GM12878 (cell line): ENCODE measurements at regions of chr1 and their contacts with region 1.

Region 1: DNA sequence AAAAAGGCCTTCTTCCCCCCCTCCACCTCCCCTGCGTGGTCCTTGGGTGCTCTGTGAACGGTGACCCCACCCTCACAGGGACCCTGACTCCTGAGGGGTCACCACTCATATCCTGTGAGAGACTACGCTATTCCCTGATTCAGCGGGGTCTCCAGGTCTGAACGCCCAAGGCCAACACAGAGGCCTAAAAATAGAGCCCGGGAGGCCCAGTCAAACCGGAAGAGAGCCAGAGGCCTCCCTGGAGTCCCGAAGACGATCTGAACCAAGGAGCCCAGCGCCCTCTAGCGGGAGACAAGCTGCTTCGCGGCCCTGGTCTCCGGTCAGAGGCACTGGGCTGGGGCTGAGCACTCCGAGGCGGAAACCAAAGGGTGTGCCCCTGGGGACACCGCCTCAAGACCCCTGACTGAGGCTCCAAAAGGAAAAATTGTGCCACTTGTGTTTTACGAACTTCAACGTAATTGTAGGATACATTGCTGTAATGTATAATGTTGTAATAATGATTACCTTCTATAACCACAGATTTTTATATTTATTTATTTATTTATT is 42.4 kb upstream of the PSEN2 start:
- DNase-seq: peak; percentile 62
- ATAC-seq: peak; percentile 95
- H3K4me3 ChIP-seq: no peak overlapping the region; the same call in 1 of the 2 replicates
- H3K27ac ChIP-seq: peak overlapping the region; percentile 85
- H3K4me1 ChIP-seq: peaks cover 31% of the 10 kb centered on the region
- H3K27me3 ChIP-seq: no peaks in the 10 kb centered on the region
- CTCF ChIP-seq: peak; percentile 93 to 98 (median 96)
- EP300 ChIP-seq: 0 out of 4 replicates have a peak, but pooled peaks of 1 of the 2 experiments have one; percentile 42
- POLR2A ChIP-seq: peak; percentile 27; the same call in 1 of the 2 replicates
- RAD21 ChIP-seq: peak; percentile 99

Region 2: DNA sequence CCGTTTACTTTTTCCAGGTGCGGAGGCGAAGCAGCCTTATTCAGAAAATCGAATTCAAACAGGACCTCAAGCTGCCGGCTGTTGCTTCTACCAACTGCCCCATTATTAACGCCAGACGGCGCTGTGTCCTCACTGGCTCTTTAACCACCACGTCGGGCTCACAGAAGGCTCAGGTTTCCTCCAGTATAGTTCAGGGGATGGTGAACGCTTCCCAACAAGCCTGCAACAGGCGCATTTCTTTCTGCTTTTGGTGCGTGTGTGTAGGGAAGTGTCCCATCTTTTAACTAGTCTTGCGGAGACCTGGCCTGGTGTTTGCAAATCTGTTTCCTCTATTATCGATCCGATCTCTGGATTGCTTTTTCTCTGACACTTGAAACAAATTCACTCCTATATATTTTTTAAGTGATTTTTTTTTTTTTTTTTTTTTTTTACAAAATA is 280.3 kb before region 1 on chr1:
- CTCF ChIA-PET with region 1: interaction called, 3 read pairs
- POLR2A ChIA-PET with region 1: no interaction called
- RAD21 ChIA-PET with region 1: interaction called, 4 read pairs
- SMC1A ChIA-PET with region 1: no interaction called
- in situ Hi-C with region 1: no loop called
- intact Hi-C with region 1: loop called (anchors 5 kb)
- DNase-seq: peak; percentile 17
- ATAC-seq: peak; percentile 92
- H3K4me3 ChIP-seq: no peak overlapping the region
- H3K27ac ChIP-seq: no peak overlapping the region
- H3K4me1 ChIP-seq: peaks cover 9% of the 10 kb centered on the region
- H3K27me3 ChIP-seq: peaks cover 10 to 11% of the 10 kb centered on the region in 2 experiments; a peak in 3 of 4 replicates
- CTCF ChIP-seq: peak; percentile 90 to 97 (median 93)
- EP300 ChIP-seq: no peak
- POLR2A ChIP-seq: no peak
- RAD21 ChIP-seq: peak; percentile 87

Region 3: GRCh38 chr1:226642876-226643576 is 185.0 kb before region 1 on chr1:
- CTCF ChIA-PET with region 1: interaction called, 8 read pairs
- POLR2A ChIA-PET with region 1: interaction called, 4 read pairs
- RAD21 ChIA-PET with region 1: interaction called, 22 read pairs
- SMC1A ChIA-PET with region 1: interaction called, 4 read pairs
- in situ Hi-C with region 1: no loop called
- intact Hi-C with region 1: no loop called
- DNase-seq: peak; percentile 33
- ATAC-seq: peak; percentile 79
- H3K4me3 ChIP-seq: no peak overlapping the region
- H3K27ac ChIP-seq: peak overlapping the region; percentile 64
- H3K4me1 ChIP-seq: peaks cover 27% of the 10 kb centered on the region
- H3K27me3 ChIP-seq: no peaks in the 10 kb centered on the region
- CTCF ChIP-seq: no peak
- EP300 ChIP-seq: no peak; a peak in 1 of 4 replicates
- POLR2A ChIP-seq: no peak
- RAD21 ChIP-seq: 0 out of 2 replicates have a peak, but pooled peaks have one; percentile 22

Region 4: GRCh38 chr1:226687426-226687825 is 140.6 kb before region 1 on chr1:
- CTCF ChIA-PET with region 1: interaction called, 12 read pairs
- POLR2A ChIA-PET with region 1: no interaction called
- RAD21 ChIA-PET with region 1: interaction called, 20 read pairs
- SMC1A ChIA-PET with region 1: interaction called, 10 read pairs
- in situ Hi-C with region 1: no loop called
- intact Hi-C with region 1: no loop called
- DNase-seq: no peak
- ATAC-seq: peak; percentile 63
- H3K4me3 ChIP-seq: no peak overlapping the region
- H3K27ac ChIP-seq: no peak overlapping the region
- H3K4me1 ChIP-seq: peaks cover 26% of the 10 kb centered on the region
- H3K27me3 ChIP-seq: no peaks in the 10 kb centered on the region
- CTCF ChIP-seq: peak; percentile 11 to 36 (median 35); a peak in 4 of 6 replicates
- EP300 ChIP-seq: no peak
- POLR2A ChIP-seq: no peak
- RAD21 ChIP-seq: peak; percentile 43

Region 5: DNA sequence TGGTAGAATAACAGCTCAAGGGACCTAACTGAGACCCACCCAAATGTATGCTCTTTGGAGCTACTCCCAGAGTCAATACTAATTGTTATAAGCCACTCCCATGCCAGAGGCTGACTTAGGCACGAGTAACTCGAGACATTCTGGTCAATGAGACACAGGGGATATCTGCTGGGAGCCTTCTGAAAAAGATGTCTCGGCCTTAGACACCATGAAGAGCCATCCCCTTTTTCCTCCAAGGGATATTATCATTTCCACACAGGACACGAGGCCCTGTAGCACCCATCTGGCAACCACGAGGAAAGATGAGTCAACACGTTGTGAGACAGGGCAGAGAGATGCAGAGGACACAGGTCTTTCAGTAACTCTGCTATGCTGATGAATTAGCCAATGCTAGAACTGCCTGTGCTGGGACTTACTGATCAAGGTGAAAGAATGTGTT is 119.7 kb before region 1 on chr1:
- CTCF ChIA-PET with region 1: interaction called, 20 read pairs
- POLR2A ChIA-PET with region 1: no interaction called
- RAD21 ChIA-PET with region 1: interaction called, 20 read pairs
- SMC1A ChIA-PET with region 1: interaction called, 17 read pairs
- in situ Hi-C with region 1: no loop called
- intact Hi-C with region 1: loop called (anchors 1 kb)
- DNase-seq: no peak
- ATAC-seq: no peak
- H3K4me3 ChIP-seq: no peak overlapping the region
- H3K27ac ChIP-seq: no peak overlapping the region
- H3K4me1 ChIP-seq: peaks cover 27% of the 10 kb centered on the region
- H3K27me3 ChIP-seq: no peaks in the 10 kb centered on the region
- CTCF ChIP-seq: no peak
- EP300 ChIP-seq: no peak
- POLR2A ChIP-seq: no peak
- RAD21 ChIP-seq: no peak

Region 6: DNA sequence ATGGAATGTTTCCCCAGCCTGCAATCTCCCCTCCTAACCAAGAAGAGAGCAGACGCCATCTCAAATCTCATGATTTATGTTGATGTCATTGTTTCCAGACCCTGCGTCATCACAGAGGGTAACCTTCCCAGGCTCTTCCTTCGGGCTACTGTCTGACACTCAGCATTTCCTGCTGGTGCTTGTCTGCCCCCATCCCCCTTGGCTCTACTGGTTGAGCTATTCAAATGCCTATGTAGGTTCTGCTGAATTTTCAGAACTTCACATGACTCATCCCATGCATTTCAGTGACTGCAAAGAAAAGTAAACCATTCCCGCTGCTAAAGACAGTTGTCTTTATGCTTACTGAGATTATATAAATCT is 64.2 kb before region 1 on chr1:
- CTCF ChIA-PET with region 1: interaction called, 6 read pairs
- POLR2A ChIA-PET with region 1: no interaction called
- RAD21 ChIA-PET with region 1: interaction called, 3 read pairs
- SMC1A ChIA-PET with region 1: interaction called, 13 read pairs
- in situ Hi-C with region 1: no loop called
- intact Hi-C with region 1: no loop called
- DNase-seq: no peak
- ATAC-seq: peak; percentile 71
- H3K4me3 ChIP-seq: 0 out of 2 replicates have a peak overlapping the region, but pooled peaks have one; percentile 35
- H3K27ac ChIP-seq: peak overlapping the region; percentile 16
- H3K4me1 ChIP-seq: peaks cover 31% of the 10 kb centered on the region
- H3K27me3 ChIP-seq: no peaks in the 10 kb centered on the region
- CTCF ChIP-seq: no peak
- EP300 ChIP-seq: no peak
- POLR2A ChIP-seq: no peak
- RAD21 ChIP-seq: no peak

Region 7: GRCh38 chr1:226798427-226799411 is 29.3 kb before region 1 on chr1:
- CTCF ChIA-PET with region 1: interaction called, 3 read pairs
- POLR2A ChIA-PET with region 1: interaction called, 3 read pairs
- RAD21 ChIA-PET with region 1: interaction called, 5 read pairs
- SMC1A ChIA-PET with region 1: interaction called, 16 read pairs
- in situ Hi-C with region 1: no loop called
- intact Hi-C with region 1: no loop called
- DNase-seq: peak; percentile 47
- ATAC-seq: peak; percentile 86
- H3K4me3 ChIP-seq: no peak overlapping the region
- H3K27ac ChIP-seq: peak overlapping the region; percentile 66
- H3K4me1 ChIP-seq: peaks cover 24% of the 10 kb centered on the region
- H3K27me3 ChIP-seq: no peaks in the 10 kb centered on the region
- CTCF ChIP-seq: no peak
- EP300 ChIP-seq: no peak
- POLR2A ChIP-seq: 0 out of 2 replicates have a peak, but pooled peaks have one; percentile 27
- RAD21 ChIP-seq: no peak